Activated T-helper 1 cell treated with anti-CD3 and anti-CD28 coated beads, Interleukin-12 subunit alpha, Interleukin-12 subunit beta, Interleukin-2, Interleukin-4 antibody, amounts not matched to agents 30 ng/mL and 10 ng/mL and 1 ng/mL, durations not matched to agents 14 hours and 24 hours and 36 hours (primary cell): ENCODE measurements at regions of chr10 and their contacts with region 1.

Region 1: DNA sequence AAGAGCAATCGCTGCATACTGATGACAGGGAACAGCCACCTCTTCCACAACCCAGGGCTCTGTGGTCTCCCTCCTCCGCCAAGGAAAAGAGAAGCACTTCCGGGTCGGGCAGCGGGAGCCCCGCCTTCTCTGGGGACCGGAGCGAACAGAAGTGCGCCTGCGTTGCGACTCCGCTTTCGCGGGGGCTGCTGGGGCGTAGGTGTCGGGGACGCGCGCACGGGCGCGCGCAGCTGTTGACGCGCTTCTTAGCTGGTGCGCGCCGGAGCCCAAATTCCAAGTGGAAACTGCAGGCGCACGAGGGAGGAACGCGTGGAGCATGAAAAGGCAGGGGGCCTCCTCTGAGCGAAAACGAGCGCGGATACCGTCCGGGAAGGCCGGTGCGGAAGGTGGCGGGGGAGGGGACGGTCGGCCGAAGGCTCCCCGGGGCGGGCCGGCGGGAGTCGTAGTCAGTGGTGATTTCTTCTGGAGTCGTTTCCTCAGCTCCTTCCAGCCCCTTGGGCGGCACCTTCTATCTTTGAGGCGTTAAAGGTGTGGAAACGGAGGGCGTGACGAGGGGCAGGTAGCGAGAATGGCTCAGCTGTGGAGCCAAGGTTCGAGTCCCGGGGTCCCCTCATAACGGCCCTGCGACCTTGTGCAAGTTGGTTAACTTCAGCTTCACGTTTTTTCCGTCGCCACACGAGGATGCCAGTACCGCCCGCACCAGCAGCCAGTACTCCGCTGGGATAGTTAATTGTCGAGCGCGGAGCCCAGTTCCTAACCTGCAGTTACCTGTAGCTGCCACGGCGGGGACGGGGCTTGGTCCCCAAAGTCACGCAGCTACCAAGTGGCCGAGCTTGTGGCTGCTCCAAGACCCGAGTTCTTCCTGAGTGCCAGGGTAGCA is at the starts of genes COX15 and CUTC:
- DNase-seq: peak; percentile 94
- H3K4me3 Mint-ChIP-seq: peak within 1 kb of the TSS; percentile 98
- H3K27ac Mint-ChIP-seq: peak within 1 kb of the TSS; percentile 99
- H3K4me1 Mint-ChIP-seq: peaks cover 41% of the 10 kb centered on the region
- H3K27me3 Mint-ChIP-seq: no peaks in the 10 kb centered on the region
- total RNA-seq, gene COX15: 36.7 and 38.1 TPM in 2 replicates
- total RNA-seq, gene CUTC: 42.2 and 45.4 TPM in 2 replicates

Region 2: DNA sequence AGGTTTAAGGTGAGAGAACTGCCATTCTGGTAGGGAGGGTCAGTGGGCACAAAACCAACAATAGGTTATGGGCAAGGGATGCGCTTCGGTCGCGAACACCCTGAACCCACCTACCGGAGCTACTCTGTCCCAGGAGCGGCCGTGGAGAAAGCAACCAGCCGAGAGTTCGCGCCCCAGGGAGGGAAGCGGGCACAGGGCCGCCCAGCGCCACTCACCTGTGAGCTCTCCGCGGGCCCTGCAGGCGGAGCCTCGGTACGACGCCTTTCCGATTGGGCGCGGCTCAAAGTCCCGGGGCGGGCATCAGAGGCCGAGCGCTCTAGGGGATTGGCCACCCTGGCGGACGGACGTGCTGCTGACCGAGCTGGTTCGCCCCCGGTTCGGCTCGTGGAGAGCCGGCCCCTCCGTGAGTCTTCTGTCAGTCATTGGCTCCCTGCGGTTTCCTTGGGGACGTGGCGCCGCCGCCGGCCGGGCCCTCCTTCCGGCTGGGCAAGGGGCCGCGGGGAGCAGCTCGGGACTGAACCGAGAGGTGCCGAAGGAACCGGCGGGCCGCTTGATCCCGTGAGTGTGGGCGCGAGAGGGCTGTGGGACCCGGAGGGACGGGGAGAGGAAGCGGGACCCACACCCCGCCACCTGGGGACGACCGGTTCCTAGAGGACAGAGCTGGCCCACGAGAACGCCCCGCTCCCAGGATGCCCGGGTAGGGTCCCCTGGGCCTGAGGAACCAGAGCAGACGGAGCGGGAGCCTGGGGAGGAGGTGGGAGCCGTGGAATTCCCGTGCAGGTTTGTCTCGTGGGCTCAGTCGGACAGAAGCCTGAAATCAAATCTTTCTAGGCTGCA is 73.0 kb before region 1 on chr10 and contains the start of gene ENTPD7:
- intact Hi-C with region 1: loop called (anchors 1 kb)
- DNase-seq: peak; percentile 90
- H3K4me3 Mint-ChIP-seq: peak within 1 kb of the TSS; percentile 96
- H3K27ac Mint-ChIP-seq: peak within 1 kb of the TSS; percentile 91
- H3K4me1 Mint-ChIP-seq: peaks cover 17% of the 10 kb centered on the region
- H3K27me3 Mint-ChIP-seq: peaks cover 19% of the 10 kb centered on the region
- total RNA-seq, gene ENTPD7: 11.0 and 11.1 TPM in 2 replicates

Region 3: DNA sequence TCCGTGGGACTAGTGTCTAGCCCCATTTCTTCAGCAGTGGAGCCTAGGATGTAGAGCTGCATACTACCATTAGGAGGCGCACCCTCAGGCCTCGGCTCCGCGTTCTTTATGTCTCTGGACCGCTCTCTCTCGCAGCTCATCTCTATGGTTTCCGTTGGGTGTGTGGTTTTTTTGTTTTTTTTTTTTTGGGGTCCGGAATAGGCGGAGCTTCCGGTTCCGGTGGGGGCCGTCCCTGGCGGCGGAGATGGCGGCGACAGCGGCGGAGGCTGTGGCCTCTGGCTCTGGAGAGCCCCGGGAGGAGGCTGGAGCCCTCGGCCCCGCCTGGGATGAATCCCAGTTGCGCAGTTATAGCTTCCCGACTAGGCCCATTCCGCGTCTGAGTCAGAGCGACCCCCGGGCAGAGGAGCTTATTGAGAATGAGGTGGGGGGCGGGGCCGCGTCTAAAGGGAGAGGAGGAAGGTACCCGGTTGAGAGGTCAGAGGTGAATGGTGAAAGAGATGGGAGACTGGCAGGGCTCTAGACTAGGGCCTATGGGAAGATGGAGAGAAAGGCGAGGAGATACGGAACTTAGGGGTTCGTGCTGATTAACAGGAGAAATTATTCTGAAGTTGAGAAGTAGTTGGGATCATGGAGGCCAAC is 803.6 kb after region 1 on chr10 and contains the start of gene HIF1AN:
- intact Hi-C with region 1: loop called (anchors 10 kb)
- DNase-seq: peak; percentile 90
- H3K4me3 Mint-ChIP-seq: no peak within 1 kb of the TSS
- H3K27ac Mint-ChIP-seq: no peak within 1 kb of the TSS
- H3K4me1 Mint-ChIP-seq: peaks cover 16% of the 10 kb centered on the region
- H3K27me3 Mint-ChIP-seq: no peaks in the 10 kb centered on the region
- total RNA-seq, gene HIF1AN: 46.5 and 54.1 TPM in 2 replicates